ENCODE measurements at regions of chr20 and their contacts with region 1.

Region 1: GRCh38 chr20:7257692-7258466 is 490.4 kb downstream of the BMP2 start:
- DNase-seq: no peak
- H3K4me3 ChIP-seq: no peak overlapping the region
- H3K4me3 Mint-ChIP-seq: no peak overlapping the region
- H3K27ac Mint-ChIP-seq: no peak overlapping the region
- H3K4me1 ChIP-seq: peaks cover 36% of the 10 kb centered on the region
- H3K4me1 Mint-ChIP-seq: peaks cover 20% of the 10 kb centered on the region
- H3K27me3 ChIP-seq: no peaks in the 10 kb centered on the region
- H3K27me3 Mint-ChIP-seq: no peaks in the 10 kb centered on the region
- CTCF ChIP-seq: no peak

Region 2: GRCh38 chr20:7147220-7147601 is 110.7 kb before region 1 on chr20:
- CTCF ChIA-PET with region 1: no interaction called
- POLR2A ChIA-PET with region 1: no interaction called
- intact Hi-C with region 1: loop called (anchors 1 kb)
- DNase-seq: peak; percentile 82 to 89
- H3K4me3 ChIP-seq: no peak overlapping the region
- H3K4me3 Mint-ChIP-seq: peak overlapping the region; percentile 53
- H3K27ac Mint-ChIP-seq: peak overlapping the region; percentile 73
- H3K4me1 ChIP-seq: peaks cover 33% of the 10 kb centered on the region
- H3K4me1 Mint-ChIP-seq: peaks cover 43% of the 10 kb centered on the region
- H3K27me3 ChIP-seq: no peaks in the 10 kb centered on the region
- H3K27me3 Mint-ChIP-seq: no peaks in the 10 kb centered on the region
- CTCF ChIP-seq: no peak

Region 3: DNA sequence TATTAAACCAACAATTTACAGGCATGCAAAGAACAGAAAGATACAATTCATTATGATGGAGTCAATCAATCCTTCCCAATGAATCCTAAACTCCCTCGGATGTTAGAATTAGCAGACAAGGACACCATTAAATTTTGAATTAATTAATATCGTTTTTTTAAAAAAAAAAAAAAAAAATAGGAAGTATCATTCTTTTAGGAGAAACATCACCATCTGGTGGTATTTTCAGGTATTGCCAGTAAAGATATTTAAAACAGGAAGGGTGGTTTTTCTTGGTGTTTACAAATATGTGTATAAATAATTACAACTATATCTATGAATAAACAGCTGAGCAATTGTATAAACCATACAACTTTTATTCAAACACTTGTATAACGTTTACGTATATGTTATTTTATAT is 118.0 kb after region 1 on chr20:
- CTCF ChIA-PET with region 1: no interaction called
- POLR2A ChIA-PET with region 1: no interaction called
- intact Hi-C with region 1: loop called (anchors 2 kb)
- DNase-seq: peak in 1 of 2 experiments; percentile 43
- H3K4me3 ChIP-seq: no peak overlapping the region
- H3K4me3 Mint-ChIP-seq: no peak overlapping the region
- H3K27ac Mint-ChIP-seq: no peak overlapping the region
- H3K4me1 ChIP-seq: no peaks in the 10 kb centered on the region
- H3K4me1 Mint-ChIP-seq: no peaks in the 10 kb centered on the region
- H3K27me3 ChIP-seq: no peaks in the 10 kb centered on the region
- H3K27me3 Mint-ChIP-seq: peaks cover 3% of the 10 kb centered on the region
- CTCF ChIP-seq: peak; percentile 55 to 62

Region 4: DNA sequence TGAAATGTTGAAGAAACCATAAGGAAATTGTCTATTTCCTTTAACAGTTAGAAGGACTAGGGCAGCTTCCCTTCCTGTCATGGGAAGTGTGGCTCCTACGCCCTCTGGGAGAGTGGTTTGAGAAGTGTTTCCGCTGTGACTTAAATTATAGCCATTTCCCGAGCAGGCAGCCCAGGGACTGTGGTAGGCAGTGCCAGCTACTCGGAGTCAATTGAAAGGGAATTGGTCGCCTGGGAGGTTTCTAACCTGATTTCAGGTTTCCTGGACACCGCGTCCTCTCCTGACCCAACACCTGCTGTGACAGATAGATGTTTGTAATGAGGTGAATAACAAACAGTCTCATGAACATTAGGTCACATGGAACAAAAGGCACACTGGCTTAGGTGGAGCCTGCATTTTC is 1554.9 kb after region 1 on chr20:
- CTCF ChIA-PET with region 1: no interaction called
- POLR2A ChIA-PET with region 1: no interaction called
- intact Hi-C with region 1: no loop called
- DNase-seq: no peak
- H3K4me3 ChIP-seq: no peak overlapping the region
- H3K4me3 Mint-ChIP-seq: no peak overlapping the region
- H3K27ac Mint-ChIP-seq: no peak overlapping the region
- H3K4me1 ChIP-seq: 0 out of 2 replicates have a peak, but pooled peaks cover 6% of the 10 kb centered on the region
- H3K4me1 Mint-ChIP-seq: peaks cover 6% of the 10 kb centered on the region
- H3K27me3 ChIP-seq: no peaks in the 10 kb centered on the region
- H3K27me3 Mint-ChIP-seq: no peaks in the 10 kb centered on the region
- CTCF ChIP-seq: no peak

Measured in Caco-2 (cell line).